CD14-positive monocyte (primary cell): ENCODE measurements at regions of chr5 and their contacts with region 1.

Region 1: GRCh38 chr5:131786900-131787692 is 9.7 kb downstream of the FNIP1 start:
- DNase-seq: no peak
- H3K4me3 ChIP-seq: no peak overlapping the region
- H3K4me3 Mint-ChIP-seq: no peak overlapping the region
- H3K27ac ChIP-seq: peak overlapping the region in 1 of 2 donors; percentile 46
- H3K27ac Mint-ChIP-seq: peak overlapping the region; percentile 2 to 72 (median 25)
- H3K4me1 ChIP-seq: peaks cover 0 to 3% of the 10 kb centered on the region in 2 donors
- H3K4me1 Mint-ChIP-seq: peaks cover 38% of the 10 kb centered on the region
- H3K27me3 ChIP-seq: no peaks in the 10 kb centered on the region
- H3K27me3 Mint-ChIP-seq: no peaks in the 10 kb centered on the region
- CTCF ChIP-seq: no peak

Region 2: GRCh38 chr5:131751506-131751905 is 35.6 kb before region 1 on chr5:
- intact Hi-C with region 1: loop called in 1 of 2 experiments (anchors 5 kb)
- DNase-seq: no peak
- H3K4me3 ChIP-seq: no peak overlapping the region
- H3K4me3 Mint-ChIP-seq: no peak overlapping the region
- H3K27ac ChIP-seq: no peak overlapping the region
- H3K27ac Mint-ChIP-seq: peak overlapping the region in 2 of 7 donors; percentile 3 to 10
- H3K4me1 ChIP-seq: peaks cover 22 to 24% of the 10 kb centered on the region in 2 donors
- H3K4me1 Mint-ChIP-seq: peaks cover 42% of the 10 kb centered on the region
- H3K27me3 ChIP-seq: no peaks in the 10 kb centered on the region
- H3K27me3 Mint-ChIP-seq: no peaks in the 10 kb centered on the region
- CTCF ChIP-seq: no peak